Prostate gland (tissue), 2 donors: ENCODE measurements at regions of chr1 and their contacts with region 1.

Region 1: DNA sequence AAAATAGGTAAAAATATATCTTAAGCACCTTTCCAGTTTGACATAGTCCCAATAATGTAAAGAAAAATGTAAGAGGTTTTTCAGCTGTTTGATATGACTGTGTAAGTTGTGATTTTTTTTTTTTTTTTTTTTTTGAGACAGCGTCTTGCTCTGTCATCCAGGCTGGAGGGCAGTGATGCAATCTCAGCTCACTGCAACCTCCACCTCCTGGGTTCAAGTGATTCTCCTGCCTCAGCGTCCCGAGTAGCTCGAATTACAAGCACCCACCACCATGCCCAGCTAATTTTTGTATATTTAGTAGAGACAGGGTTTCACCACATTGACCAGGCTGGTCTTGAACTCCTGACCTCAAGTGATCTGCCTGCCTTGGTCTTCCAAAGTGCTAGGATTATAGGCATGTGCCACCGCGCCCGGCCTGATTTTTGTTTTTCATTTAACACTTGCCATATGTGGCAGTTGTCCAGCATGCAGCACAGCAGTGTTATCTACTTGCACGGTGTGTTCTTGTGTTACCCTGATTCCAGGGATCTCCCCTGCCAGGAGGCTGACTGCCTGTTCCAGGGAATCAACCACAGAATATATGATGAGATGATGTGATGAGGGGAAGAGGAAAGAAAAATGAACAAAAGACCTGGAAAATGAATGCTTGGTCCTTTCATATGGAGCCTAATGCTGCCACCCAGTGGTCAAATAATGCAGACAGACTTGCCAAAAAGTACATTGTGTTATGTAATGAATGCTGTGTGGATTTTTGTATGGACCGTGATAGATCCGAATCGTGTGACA is 79.0 kb downstream of the RAVER2 start:
- DNase-seq: peak; percentile 66
- H3K4me3 ChIP-seq: no peak overlapping the region
- H3K27ac ChIP-seq: no peak overlapping the region
- H3K4me1 ChIP-seq: no peaks in the 10 kb centered on the region
- H3K27me3 ChIP-seq: no peaks in the 10 kb centered on the region
- CTCF ChIP-seq: peak; percentile 52 to 87 (median 82)
- POLR2A ChIP-seq: no peak

Region 2: GRCh38 chr1:64268653-64269557 is 555.0 kb before region 1 on chr1:
- intact Hi-C with region 1: loop called (anchors 2 kb)
- DNase-seq: peak; percentile 77
- H3K4me3 ChIP-seq: no peak overlapping the region
- H3K27ac ChIP-seq: no peak overlapping the region
- H3K4me1 ChIP-seq: no peaks in the 10 kb centered on the region
- H3K27me3 ChIP-seq: no peaks in the 10 kb centered on the region
- CTCF ChIP-seq: peak; percentile 58 to 84 (median 72)
- POLR2A ChIP-seq: no peak

Region 3: DNA sequence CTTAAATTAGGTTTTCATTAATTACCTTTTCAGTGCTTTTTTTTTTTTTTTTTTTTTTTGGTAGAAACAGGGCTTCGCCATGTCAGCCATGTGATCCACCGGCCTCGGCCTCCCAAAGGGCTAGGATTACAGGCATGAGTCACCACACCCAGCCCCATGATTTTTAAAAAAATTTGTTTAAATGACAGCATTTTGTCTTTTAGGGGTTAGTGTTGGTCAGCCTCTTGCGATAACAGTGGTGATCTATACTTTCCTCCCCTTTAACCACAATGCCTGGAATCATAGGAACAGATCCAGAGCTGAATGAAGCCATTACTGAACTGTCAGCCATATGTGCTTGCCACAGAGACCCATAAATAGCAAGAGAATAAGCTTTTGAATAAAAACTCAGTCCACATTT is 280.1 kb before region 1 on chr1:
- intact Hi-C with region 1: no loop called
- DNase-seq: no peak
- H3K4me3 ChIP-seq: no peak overlapping the region
- H3K27ac ChIP-seq: no peak overlapping the region
- H3K4me1 ChIP-seq: no peaks in the 10 kb centered on the region
- H3K27me3 ChIP-seq: no peaks in the 10 kb centered on the region
- CTCF ChIP-seq: no peak
- POLR2A ChIP-seq: no peak

Region 4: GRCh38 chr1:64654519-64655341 is 169.2 kb before region 1 on chr1:
- intact Hi-C with region 1: no loop called
- DNase-seq: no peak
- H3K4me3 ChIP-seq: no peak overlapping the region
- H3K27ac ChIP-seq: no peak overlapping the region
- H3K4me1 ChIP-seq: no peaks in the 10 kb centered on the region
- H3K27me3 ChIP-seq: no peaks in the 10 kb centered on the region
- CTCF ChIP-seq: peak in 1 of 4 experiments; percentile 19
- POLR2A ChIP-seq: no peak

Region 5: DNA sequence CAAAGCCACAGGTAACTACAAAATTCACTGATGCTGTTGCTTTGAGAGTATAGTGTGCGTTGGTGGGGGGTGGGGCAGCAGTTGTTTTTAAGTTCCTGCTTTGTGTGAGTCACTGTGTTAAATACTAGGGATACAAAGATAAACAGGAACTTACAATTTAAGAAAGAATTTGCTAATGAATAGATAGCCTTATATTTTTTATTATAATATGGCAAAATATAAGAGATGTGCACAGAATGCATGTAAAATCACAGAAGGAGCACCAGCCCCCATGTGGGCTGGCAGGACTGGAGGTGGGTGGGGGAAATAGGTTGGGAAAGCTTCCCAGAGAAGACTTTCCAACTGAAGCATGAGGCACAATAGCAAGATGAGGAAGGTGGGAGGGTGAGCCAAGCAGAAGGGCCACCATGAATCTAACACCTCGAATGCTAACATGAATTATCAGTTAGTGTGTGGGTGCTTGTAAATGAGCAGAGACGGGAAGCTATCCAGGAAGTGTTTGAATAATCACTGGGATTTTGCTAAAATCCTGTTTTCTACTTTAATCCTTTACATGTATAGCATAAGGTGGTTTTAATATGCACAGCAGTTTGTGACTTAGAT is 136.1 kb before region 1 on chr1:
- intact Hi-C with region 1: loop called (anchors 1 kb)
- DNase-seq: no peak
- H3K4me3 ChIP-seq: no peak overlapping the region
- H3K27ac ChIP-seq: no peak overlapping the region
- H3K4me1 ChIP-seq: no peaks in the 10 kb centered on the region
- H3K27me3 ChIP-seq: no peaks in the 10 kb centered on the region
- CTCF ChIP-seq: no peak
- POLR2A ChIP-seq: no peak

Region 6: GRCh38 chr1:64744492-64745180 is 79.2 kb before region 1 on chr1 and contains the start of gene RAVER2:
- intact Hi-C with region 1: loop called (anchors 5 kb)
- DNase-seq: peak; percentile 84
- H3K4me3 ChIP-seq: peak within 1 kb of the TSS; percentile 68 to 69
- H3K27ac ChIP-seq: peak within 1 kb of the TSS; percentile 81 to 82
- H3K4me1 ChIP-seq: no peaks in the 10 kb centered on the region
- H3K27me3 ChIP-seq: no peaks in the 10 kb centered on the region
- CTCF ChIP-seq: peak in 2 of 4 experiments; percentile 39 to 53
- POLR2A ChIP-seq: peak; percentile 52
- total RNA-seq, gene RAVER2: 11.8 to 18.3 TPM

Region 7: DNA sequence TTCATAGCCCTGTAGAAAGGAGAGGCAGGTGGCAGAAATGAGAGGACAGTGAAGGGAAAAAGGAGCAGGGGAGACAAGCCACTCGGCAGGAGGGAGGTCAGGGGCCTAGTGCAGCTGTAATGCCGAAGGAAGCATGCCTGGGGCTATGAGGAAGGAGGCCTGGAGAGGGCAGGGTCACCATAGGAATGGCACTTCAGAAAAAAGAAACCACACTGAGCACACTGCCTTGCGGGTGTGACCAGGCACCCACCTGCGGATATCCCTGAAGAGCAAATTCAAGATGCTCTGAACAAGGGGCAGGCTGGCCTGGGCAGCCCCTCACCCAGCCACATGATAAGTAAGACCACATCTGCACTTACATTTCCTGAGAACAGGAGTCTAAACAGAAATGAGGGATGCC is 37.7 kb after region 1 on chr1:
- intact Hi-C with region 1: no loop called
- DNase-seq: no peak
- H3K4me3 ChIP-seq: no peak overlapping the region
- H3K27ac ChIP-seq: no peak overlapping the region
- H3K4me1 ChIP-seq: no peaks in the 10 kb centered on the region
- H3K27me3 ChIP-seq: no peaks in the 10 kb centered on the region
- CTCF ChIP-seq: peak in 1 of 4 experiments; percentile 6
- POLR2A ChIP-seq: no peak

Region 8: GRCh38 chr1:65289449-65289848 is 465.6 kb after region 1 on chr1:
- intact Hi-C with region 1: no loop called
- DNase-seq: no peak
- H3K4me3 ChIP-seq: no peak overlapping the region
- H3K27ac ChIP-seq: no peak overlapping the region
- H3K4me1 ChIP-seq: no peaks in the 10 kb centered on the region
- H3K27me3 ChIP-seq: no peaks in the 10 kb centered on the region
- CTCF ChIP-seq: no peak
- POLR2A ChIP-seq: no peak